Transverse colon (tissue), 4 donors: ENCODE measurements at regions of chr2 and their contacts with region 1.

Region 1: DNA sequence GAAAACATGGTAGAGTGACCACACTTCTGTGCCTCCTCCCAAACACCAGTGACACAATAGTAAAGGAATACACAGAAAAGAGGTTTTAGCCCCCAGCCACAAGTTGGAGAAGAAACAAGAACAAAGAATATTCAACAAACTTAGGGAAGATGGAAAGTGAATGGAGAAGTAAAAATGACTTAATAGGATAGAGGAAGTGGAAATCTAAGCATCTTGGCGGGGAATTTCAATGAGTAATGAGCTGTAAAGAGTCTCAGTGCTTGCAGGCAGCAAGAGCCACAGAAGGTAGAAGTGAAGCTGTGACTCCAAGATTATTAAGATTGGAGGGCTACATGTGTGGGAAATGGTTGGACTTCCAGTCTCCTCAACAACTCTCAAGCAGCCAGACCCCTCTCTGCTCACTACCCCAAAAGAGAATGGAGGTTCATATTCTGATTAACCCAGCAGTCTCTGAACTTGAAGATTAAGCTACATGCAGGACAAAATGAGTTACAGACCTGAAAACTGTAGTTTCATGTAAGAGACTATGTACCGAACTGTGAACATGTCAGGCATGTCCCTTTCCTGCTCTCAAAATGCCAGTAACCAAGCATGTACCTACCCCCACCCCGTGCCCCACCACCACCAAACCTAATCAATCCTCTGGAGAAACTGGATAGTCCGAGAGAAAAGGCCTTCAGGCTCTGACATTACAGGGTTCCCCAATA is 16.9 kb upstream of the HNRNPLL start:
- DNase-seq: no peak
- H3K4me3 ChIP-seq: no peak overlapping the region
- H3K27ac ChIP-seq: peak overlapping the region in 2 of 4 donors; percentile 0 to 19
- H3K4me1 ChIP-seq: peaks cover 0 to 15% (median 6%) of the 10 kb centered on the region in 4 donors
- H3K27me3 ChIP-seq: no peaks in the 10 kb centered on the region
- CTCF ChIP-seq: no peak
- EP300 ChIP-seq: no peak
- POLR2A ChIP-seq: no peak

Region 2: DNA sequence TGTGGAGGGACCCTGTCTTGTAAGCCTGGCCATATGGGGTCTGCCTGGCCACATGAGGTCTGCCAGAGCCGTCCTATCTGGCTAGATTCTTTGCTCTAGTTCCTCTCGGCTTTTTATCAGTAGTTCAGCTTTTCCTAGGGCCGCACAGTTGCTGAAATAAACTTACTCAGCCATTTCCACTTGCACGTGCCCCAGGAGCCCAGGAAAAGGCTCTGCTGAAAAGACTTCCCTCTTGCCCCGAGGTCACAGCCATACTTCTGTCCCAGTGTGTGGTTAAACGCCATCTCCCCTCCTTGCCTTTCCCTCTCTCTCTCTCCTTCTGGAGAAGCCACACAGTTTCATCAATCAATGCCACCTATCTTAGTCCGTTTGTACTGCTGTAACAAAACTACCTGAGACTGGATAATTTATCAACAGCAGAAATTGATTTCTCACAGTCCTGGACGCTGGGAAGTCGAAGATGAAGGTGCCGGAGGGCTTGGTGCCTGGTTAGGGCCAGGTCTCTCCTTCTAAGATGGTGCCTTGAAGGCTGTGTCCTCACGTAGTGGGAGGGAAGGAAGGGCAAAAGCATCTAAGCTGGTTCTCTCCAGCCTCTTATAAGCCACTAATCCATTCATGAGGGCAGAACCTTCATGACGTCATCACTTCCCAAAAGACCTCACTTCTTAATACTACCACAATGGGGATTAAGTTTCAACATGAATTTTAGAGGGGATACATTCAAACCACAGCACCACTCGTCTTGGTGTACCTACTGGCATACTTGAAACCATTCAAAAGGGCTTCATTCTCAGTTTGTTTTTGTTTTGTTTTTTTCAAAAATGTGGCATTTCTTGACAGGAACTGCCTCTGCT is 35.1 kb after region 1 on chr2:
- in situ Hi-C with region 1: no loop called
- intact Hi-C with region 1: loop called (anchors 5 kb)
- DNase-seq: no peak
- H3K4me3 ChIP-seq: no peak overlapping the region
- H3K27ac ChIP-seq: peak overlapping the region in 1 of 4 donors; percentile 5
- H3K4me1 ChIP-seq: peaks cover 0 to 8% (median 3%) of the 10 kb centered on the region in 4 donors
- H3K27me3 ChIP-seq: no peaks in the 10 kb centered on the region
- CTCF ChIP-seq: no peak
- EP300 ChIP-seq: no peak
- POLR2A ChIP-seq: no peak